Mammary epithelial cell (primary cell): ENCODE measurements at regions of chr7 and their contacts with region 1.

Region 1: DNA sequence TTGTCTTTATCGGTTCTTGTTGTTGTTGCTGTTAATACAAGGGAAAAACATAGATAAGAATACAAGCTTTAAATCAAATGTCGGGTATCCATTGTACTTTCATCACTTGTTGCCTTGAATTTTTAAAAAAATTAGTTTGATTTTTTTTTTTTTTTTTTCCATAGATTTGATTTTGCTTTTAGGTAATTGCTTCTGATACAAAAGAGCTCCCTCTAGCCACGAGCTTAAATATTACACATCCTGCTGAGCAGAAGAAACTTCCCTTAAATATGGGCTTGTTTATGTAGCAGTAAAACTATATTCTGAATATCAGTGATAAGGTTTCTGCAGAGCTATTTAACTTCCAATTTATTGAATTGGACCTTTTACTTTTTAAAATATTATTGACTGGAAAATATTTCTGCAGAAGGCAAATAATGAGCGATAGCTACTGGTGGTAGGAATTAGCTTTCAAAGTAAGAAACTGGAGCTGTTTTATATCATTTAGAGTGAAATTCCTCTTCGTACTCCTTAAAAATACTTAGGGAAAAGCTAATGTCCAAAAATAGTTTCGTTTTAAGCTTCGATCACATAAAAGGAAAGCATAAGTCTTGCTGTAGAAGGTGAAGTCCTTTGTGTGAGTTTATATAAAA is 216.9 kb downstream of the POLR1F start:
- DNase-seq: peak; percentile 17
- H3K4me3 ChIP-seq: no peak overlapping the region
- H3K27ac ChIP-seq: no peak overlapping the region
- H3K4me1 ChIP-seq: no peaks in the 10 kb centered on the region
- H3K27me3 ChIP-seq: peaks cover 2% of the 10 kb centered on the region
- CTCF ChIP-seq: peak; percentile 66 to 69

Region 2: GRCh38 chr7:18760631-18761445 is 731.1 kb before region 1 on chr7:
- CTCF ChIA-PET with region 1: interaction called, 13 read pairs
- dilution Hi-C with region 1: no loop called
- in situ Hi-C with region 1: no loop called
- intact Hi-C with region 1: no loop called
- DNase-seq: no peak
- H3K4me3 ChIP-seq: no peak overlapping the region
- H3K27ac ChIP-seq: no peak overlapping the region
- H3K4me1 ChIP-seq: no peaks in the 10 kb centered on the region
- H3K27me3 ChIP-seq: no peaks in the 10 kb centered on the region
- CTCF ChIP-seq: no peak

Region 3: GRCh38 chr7:19161671-19162070 is 330.3 kb before region 1 on chr7:
- CTCF ChIA-PET with region 1: interaction called, 16 read pairs
- dilution Hi-C with region 1: no loop called
- in situ Hi-C with region 1: no loop called
- intact Hi-C with region 1: no loop called
- DNase-seq: no peak
- H3K4me3 ChIP-seq: no peak overlapping the region
- H3K27ac ChIP-seq: no peak overlapping the region
- H3K4me1 ChIP-seq: no peaks in the 10 kb centered on the region
- H3K27me3 ChIP-seq: peaks cover 5% of the 10 kb centered on the region
- CTCF ChIP-seq: no peak

Region 4: DNA sequence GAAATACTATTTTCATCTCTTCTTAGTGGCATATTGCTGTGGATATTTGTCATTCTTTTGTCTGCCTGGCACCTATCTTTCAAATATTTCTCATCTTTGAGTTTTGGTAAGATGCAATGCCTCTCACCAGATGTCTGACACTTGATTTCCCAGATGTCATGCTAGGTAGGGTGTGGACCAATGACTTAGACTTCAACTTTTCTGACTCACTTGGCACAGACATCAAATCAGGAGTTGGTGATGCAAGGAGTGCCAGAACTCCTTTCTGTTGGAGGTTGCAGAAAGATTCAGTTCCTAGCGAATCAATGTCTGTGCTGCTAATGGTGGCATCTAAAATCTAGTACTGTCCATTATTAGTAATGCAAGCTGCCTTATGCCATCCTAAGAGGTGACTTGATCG is 129.8 kb before region 1 on chr7:
- CTCF ChIA-PET with region 1: no interaction called
- dilution Hi-C with region 1: no loop called
- in situ Hi-C with region 1: no loop called
- intact Hi-C with region 1: no loop called
- DNase-seq: peak; percentile 41
- H3K4me3 ChIP-seq: no peak overlapping the region
- H3K27ac ChIP-seq: no peak overlapping the region
- H3K4me1 ChIP-seq: no peaks in the 10 kb centered on the region
- H3K27me3 ChIP-seq: no peaks in the 10 kb centered on the region
- CTCF ChIP-seq: no peak